RWPE1 (cell line): ENCODE measurements at regions of chr19 and their contacts with region 1.

Region 1: GRCh38 chr19:37902668-37903067 is 3.7 kb downstream of the WDR87 start:
- DNase-seq: peak; percentile 78
- H3K27ac ChIP-seq: no peak overlapping the region
- CTCF ChIP-seq: peak; percentile 83

Region 2: GRCh38 chr19:38079926-38080380 is 177.3 kb after region 1 on chr19:
- CTCF ChIA-PET with region 1: interaction called, 10 read pairs
- POLR2A ChIA-PET with region 1: no interaction called
- DNase-seq: peak; percentile 46
- H3K27ac ChIP-seq: peak overlapping the region; percentile 54
- CTCF ChIP-seq: no peak